ENCODE measurements at regions of chr7 and their contacts with region 1.

Region 1: DNA sequence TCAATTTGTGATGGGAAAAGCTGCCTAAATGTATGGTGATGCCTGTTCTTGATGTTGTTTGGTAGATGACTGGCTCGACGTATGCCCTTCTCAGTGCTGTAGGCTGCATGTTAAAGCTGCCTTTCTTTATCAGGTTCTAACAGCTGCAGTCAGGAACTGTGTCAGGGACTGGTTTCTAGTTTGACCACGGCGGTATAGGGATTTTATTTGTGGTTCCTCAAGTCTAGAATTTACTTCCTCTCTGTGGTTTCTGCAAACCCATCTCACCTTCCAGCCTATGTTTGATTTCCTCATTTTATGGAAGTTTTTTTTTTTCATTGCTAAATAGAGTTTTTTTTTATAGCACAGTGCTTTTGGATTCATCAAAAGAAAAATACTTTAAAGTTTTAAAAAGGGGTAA is 26.5 kb downstream of the LMTK2 start:
- DNase-seq: no peak
- H3K4me3 Mint-ChIP-seq: peak overlapping the region; percentile 35
- H3K27ac Mint-ChIP-seq: peak overlapping the region; percentile 26
- H3K4me1 Mint-ChIP-seq: peaks cover 30% of the 10 kb centered on the region
- H3K27me3 Mint-ChIP-seq: peaks cover 12% of the 10 kb centered on the region

Region 2: GRCh38 chr7:98202367-98203195 is 69.4 kb after region 1 on chr7:
- intact Hi-C with region 1: loop called (anchors 5 kb)
- DNase-seq: peak; percentile 71
- H3K4me3 Mint-ChIP-seq: peak overlapping the region; percentile 6
- H3K27ac Mint-ChIP-seq: peak overlapping the region; percentile 75
- H3K4me1 Mint-ChIP-seq: peaks cover 32% of the 10 kb centered on the region
- H3K27me3 Mint-ChIP-seq: no peaks in the 10 kb centered on the region

Region 3: DNA sequence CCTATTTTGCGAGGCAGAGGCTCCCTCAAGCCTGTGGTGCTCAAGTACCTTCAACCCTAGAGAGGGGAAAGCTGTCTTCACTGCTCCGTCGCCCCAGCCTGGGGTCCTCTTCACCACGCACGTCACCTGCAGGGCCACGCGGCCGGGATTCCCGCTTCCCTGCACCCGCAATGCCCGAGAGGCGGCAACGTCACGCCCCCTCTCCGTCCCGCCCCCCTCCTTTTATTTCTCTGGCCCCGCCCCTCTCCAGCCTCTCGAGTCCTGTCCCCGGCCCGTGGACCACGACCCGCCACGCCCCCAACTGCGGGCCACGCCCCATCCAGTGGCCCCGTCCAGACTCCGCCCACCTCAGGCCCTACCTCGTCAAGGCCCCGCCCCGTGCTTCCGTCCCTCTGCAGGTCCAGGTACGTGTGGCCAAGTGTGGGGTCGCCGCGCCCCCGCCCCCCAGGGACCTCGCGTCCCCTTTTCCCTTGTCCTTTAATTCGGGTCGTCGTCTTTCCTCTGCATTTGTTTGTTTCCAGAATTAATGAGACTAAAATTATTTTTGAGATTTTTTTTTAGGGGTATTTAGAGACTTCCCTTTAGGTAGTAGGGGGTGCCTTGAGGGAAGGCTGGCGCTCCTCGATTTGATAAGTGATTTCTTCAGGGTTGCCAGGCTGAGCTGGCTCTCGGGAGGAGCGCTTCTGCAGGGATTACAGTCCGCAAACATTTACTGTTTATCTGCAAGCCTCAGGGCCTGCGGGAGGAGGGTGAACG is 337.5 kb after region 1 on chr7:
- intact Hi-C with region 1: no loop called
- DNase-seq: no peak
- H3K4me3 Mint-ChIP-seq: no peak overlapping the region
- H3K27ac Mint-ChIP-seq: no peak overlapping the region
- H3K4me1 Mint-ChIP-seq: no peaks in the 10 kb centered on the region
- H3K27me3 Mint-ChIP-seq: peaks cover 2% of the 10 kb centered on the region